HAP-1 (cell line): ENCODE measurements at regions of chr14 and their contacts with region 1.

Region 1: DNA sequence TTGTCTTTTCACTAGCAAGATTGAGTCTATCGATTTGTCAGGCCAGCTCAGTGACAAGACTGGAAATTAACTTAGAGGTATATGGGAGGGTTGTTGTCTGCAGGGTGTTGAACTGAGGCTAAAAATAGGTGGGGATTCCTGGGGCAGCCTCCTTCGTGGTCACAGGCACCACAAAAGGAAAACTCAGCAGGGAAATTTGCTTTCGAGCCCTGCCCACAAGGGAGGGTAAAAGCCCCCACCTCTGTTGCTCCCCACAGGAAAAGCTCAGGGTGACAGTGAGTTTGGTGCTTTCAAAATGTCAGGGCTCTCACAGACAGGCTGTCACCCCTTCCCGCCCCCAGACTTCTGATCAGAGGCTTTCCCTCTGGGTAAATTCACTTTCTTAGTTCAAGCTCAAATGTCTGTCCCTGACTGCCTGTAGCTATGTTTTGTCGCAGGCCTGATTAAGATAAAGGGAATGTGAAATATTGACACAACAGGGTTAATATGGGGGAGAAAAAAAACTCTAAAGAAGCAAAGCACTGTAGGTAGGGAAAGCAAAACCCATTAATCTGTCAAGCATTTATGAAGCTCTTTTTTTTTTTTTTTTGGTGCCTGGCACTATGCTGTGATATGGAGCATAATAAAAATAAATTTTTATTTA is 11.7 kb upstream of the NFKBIA start:
- DNase-seq: no peak
- H3K4me3 ChIP-seq: no peak overlapping the region
- H3K4me1 ChIP-seq: no peaks in the 10 kb centered on the region
- H3K27me3 ChIP-seq: no peaks in the 10 kb centered on the region

Region 2: GRCh38 chr14:34303831-34304230 is 1112.4 kb before region 1 on chr14:
- in situ Hi-C with region 1: no loop called
- DNase-seq: no peak
- H3K4me3 ChIP-seq: no peak overlapping the region
- H3K4me1 ChIP-seq: peaks cover 4% of the 10 kb centered on the region; the same call in 1 of the 2 replicates
- H3K27me3 ChIP-seq: peaks cover 15% of the 10 kb centered on the region

Region 3: GRCh38 chr14:34678306-34678705 is 737.9 kb before region 1 on chr14:
- in situ Hi-C with region 1: loop called (anchors 10 kb)
- DNase-seq: no peak
- H3K4me3 ChIP-seq: no peak overlapping the region
- H3K4me1 ChIP-seq: peaks cover 23% of the 10 kb centered on the region
- H3K27me3 ChIP-seq: no peaks in the 10 kb centered on the region

Region 4: GRCh38 chr14:35107866-35108265 is 308.4 kb before region 1 on chr14:
- in situ Hi-C with region 1: no loop called
- DNase-seq: no peak
- H3K4me3 ChIP-seq: no peak overlapping the region
- H3K4me1 ChIP-seq: peaks cover 1% of the 10 kb centered on the region
- H3K27me3 ChIP-seq: no peaks in the 10 kb centered on the region

Region 5: GRCh38 chr14:35121887-35122695 is 294.1 kb before region 1 on chr14 and contains the starts of genes PPP2R3C and PRORP:
- in situ Hi-C with region 1: no loop called
- DNase-seq: peak; percentile 90 to 95
- H3K4me3 ChIP-seq: peak within 1 kb of the TSS; percentile 59
- H3K4me1 ChIP-seq: peaks cover 10% of the 10 kb centered on the region; the same call in 1 of the 2 replicates
- H3K27me3 ChIP-seq: no peaks in the 10 kb centered on the region

Region 6: GRCh38 chr14:35134328-35135123 is 281.7 kb before region 1 on chr14:
- in situ Hi-C with region 1: loop called (anchors 5 kb)
- DNase-seq: no peak
- H3K4me3 ChIP-seq: no peak overlapping the region
- H3K4me1 ChIP-seq: no peaks in the 10 kb centered on the region
- H3K27me3 ChIP-seq: no peaks in the 10 kb centered on the region

Region 7: GRCh38 chr14:35687335-35687939 is 271.2 kb after region 1 on chr14:
- in situ Hi-C with region 1: loop called (anchors 10 kb)
- DNase-seq: peak; percentile 61 to 69
- H3K4me3 ChIP-seq: no peak overlapping the region
- H3K4me1 ChIP-seq: no peaks in the 10 kb centered on the region
- H3K27me3 ChIP-seq: no peaks in the 10 kb centered on the region